Dorsolateral prefrontal cortex (tissue), 120 donors: ENCODE measurements at regions of chr2 and their contacts with region 1.

Region 1: DNA sequence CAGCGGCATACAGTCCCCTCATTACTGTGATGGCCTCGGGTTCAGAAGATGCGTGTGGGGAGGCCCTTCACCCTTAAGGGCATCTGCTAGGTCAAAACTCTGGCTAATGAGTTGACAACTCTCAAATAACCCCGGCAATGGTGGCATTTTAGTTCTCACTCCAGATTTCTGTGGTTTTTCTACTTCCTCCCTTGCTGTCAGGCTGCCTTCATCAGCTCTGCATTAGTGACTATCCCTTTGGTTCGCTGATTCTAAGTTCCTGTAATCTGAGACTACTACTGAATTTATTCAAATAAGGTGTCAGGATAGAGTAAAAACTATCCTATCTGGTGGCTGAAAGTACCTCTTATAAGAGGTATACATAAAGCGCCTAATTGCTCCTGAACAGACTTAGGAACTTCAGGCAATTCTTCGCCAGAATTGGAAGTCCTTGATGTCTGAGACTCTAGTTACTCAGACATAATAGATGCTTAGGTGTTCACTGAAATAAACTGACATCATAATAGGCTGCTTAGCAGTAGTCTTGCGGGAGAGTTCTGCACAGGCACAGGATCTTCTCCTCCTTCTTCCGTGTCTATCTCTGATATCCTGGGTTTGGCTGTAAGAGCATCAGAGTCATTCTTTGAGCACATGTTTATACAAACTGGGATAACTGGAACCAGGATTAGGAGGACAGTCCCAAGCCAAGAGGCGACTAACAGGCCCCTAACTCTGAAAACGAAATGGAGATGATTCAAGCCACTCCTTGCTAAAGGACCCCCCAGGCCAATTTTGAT is 194.5 kb downstream of the DNER start:
- DNase-seq: no peak
- H3K4me3 ChIP-seq: no peak overlapping the region
- H3K27ac ChIP-seq: no peak overlapping the region
- H3K27me3 ChIP-seq: no peaks in the 10 kb centered on the region
- CTCF ChIP-seq: no peak

Region 2: DNA sequence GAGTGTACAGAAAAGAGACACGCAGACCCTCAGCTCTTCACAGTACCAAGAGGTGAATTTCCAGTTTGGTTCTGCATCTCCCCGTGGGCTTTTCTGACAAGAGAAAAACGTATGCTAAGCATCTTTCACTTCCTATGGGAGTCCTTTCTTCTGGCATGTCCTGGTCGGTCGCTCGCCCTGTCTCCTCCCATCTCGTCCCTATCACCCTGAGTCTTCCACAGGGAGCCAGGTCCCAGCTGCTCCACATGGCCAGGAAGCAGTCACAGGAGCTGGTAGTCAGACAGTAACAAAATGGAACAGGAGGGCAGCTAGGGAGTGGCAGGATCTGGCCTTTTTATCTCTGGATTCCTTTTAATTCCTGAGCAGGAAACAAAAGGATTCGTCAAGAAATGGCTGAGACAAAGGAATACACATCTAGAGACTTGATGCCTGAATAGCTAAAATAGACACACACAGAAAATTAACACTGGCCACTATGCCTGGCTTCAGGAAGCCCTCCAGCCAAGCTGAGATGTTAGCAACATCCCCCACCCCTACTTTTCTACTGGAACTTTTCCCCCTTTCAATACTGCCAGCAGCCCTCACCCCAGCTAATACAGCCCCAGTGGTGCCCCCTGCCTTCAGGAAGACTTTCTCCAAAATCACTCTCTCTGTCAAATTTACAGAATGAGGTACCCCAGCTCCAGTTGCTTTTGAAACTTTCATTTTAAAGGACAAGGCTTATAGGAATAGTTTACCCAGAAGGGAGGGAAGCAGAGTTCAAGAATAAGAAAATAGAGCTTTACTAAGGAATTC is 58.4 kb after region 1 on chr2:
- intact Hi-C with region 1: loop called in 1 of 2 experiments (anchors 5 kb)
- DNase-seq: no peak
- H3K4me3 ChIP-seq: no peak overlapping the region
- H3K27ac ChIP-seq: no peak overlapping the region
- H3K27me3 ChIP-seq: no peaks in the 10 kb centered on the region
- CTCF ChIP-seq: peak in 3 of 56 donors; percentile 6 to 16 (median 8)